ENCODE measurements at regions of chr4 and their contacts with region 1.

Region 1: DNA sequence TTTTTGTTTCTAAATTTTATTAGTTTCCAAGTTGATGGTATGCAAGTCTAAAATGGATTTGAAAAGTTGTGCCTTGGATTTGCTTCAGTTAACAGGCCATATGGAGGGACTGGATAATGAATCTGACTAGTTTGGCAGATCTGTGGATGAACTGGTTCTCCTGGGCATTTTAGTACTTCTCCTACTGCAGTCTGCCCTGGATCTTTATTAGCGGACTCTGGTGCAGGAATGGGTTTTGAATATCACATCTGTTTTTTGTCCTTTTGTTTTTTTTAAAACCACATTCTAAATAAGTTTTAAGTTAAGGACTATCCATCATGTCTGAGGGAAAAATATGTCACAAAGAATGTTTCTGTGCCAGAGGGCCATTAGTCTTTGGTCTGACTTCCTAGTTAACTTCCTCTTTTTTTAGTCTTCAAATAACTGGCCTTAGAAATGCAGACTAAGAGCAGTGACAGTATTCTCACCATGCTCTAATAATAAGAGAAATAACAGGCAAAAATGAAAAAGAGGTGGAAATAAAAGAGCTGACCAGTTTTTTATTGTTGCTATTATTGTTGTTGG is 13.9 kb upstream of the DCK start:
- DNase-seq: no peak
- ATAC-seq: peak; percentile 34
- H3K4me3 Mint-ChIP-seq: no peak overlapping the region
- H3K27ac Mint-ChIP-seq: peak overlapping the region; percentile 59
- H3K4me1 Mint-ChIP-seq: peaks cover 17% of the 10 kb centered on the region
- H3K27me3 Mint-ChIP-seq: no peaks in the 10 kb centered on the region
- CTCF ChIP-seq: no peak

Region 2: GRCh38 chr4:71026086-71026485 is 46.6 kb after region 1 on chr4:
- CTCF ChIA-PET with region 1: no interaction called
- POLR2A ChIA-PET with region 1: no interaction called
- intact Hi-C with region 1: loop called (anchors 5 kb)
- DNase-seq: no peak
- ATAC-seq: no peak
- H3K4me3 Mint-ChIP-seq: no peak overlapping the region
- H3K27ac Mint-ChIP-seq: peak overlapping the region; percentile 21
- H3K4me1 Mint-ChIP-seq: peaks cover 3% of the 10 kb centered on the region
- H3K27me3 Mint-ChIP-seq: no peaks in the 10 kb centered on the region
- CTCF ChIP-seq: no peak

Region 3: DNA sequence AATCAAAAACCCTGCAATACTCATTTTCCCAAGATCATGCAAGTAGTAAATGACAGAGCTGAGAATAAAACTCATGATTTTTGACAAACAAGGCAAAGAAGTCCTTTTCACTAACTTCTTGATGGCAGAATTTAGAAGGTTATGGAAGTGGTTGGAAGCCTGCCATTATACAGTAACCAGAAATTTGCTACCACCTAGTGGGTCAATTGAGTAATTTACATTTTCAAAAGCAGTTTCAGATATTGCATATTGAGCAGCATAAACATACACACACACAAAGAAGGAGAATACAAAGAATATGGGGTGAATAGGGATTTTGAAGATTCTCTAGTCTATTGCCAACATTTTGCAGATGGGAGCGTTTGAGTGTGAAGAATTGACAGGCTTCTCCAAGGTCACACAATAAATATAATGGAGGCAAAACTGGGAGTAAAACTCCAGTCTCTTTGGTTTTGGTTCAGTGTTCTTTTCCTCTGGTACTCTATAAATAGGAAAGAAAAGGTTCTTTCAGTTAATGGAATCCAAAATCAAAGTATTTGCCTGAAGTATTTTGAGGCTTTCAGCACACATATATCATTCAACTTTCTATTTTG is 734.2 kb after region 1 on chr4:
- CTCF ChIA-PET with region 1: no interaction called
- POLR2A ChIA-PET with region 1: no interaction called
- intact Hi-C with region 1: loop called (anchors 5 kb)
- DNase-seq: no peak
- ATAC-seq: no peak
- H3K4me3 Mint-ChIP-seq: no peak overlapping the region
- H3K27ac Mint-ChIP-seq: no peak overlapping the region
- H3K4me1 Mint-ChIP-seq: no peaks in the 10 kb centered on the region
- H3K27me3 Mint-ChIP-seq: no peaks in the 10 kb centered on the region
- CTCF ChIP-seq: no peak

Region 4: DNA sequence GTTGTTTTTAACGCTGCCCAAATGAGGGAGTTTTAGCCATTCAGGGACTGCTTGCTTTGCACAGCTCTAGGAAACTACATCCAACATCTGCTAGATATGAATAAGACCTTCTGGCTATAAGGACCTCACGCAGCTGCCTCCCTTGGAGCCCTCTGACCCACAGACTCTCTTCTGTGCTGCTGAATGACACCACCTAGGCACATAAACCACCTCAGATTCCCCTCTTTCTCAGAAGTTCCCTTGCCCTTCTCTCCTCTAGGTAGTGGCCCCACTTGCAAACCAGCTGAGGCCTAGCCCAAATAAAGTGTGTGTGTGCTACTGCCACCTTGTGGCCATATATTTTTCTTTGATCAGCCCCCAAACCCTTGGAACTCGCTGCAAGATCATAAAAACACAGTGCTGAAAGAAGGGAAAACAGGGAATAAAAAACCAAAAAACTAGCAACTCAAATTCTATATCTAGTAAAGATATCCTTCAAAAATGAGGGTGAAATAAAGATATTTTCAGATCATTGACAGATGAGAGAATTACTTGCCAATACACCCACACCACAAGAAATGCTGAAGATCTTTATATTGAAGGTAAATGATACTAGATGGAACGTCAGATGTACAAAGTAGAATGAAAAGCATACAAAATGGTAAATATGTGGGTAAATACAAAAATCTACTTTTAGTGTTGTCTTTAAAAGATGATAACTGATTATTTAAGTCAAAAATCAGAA is 1323.6 kb after region 1 on chr4:
- CTCF ChIA-PET with region 1: no interaction called
- POLR2A ChIA-PET with region 1: no interaction called
- intact Hi-C with region 1: loop called (anchors 10 kb)
- DNase-seq: peak; percentile 15
- ATAC-seq: peak; percentile 50
- H3K4me3 Mint-ChIP-seq: no peak overlapping the region
- H3K27ac Mint-ChIP-seq: no peak overlapping the region
- H3K4me1 Mint-ChIP-seq: no peaks in the 10 kb centered on the region
- H3K27me3 Mint-ChIP-seq: no peaks in the 10 kb centered on the region
- CTCF ChIP-seq: no peak

Region 5: DNA sequence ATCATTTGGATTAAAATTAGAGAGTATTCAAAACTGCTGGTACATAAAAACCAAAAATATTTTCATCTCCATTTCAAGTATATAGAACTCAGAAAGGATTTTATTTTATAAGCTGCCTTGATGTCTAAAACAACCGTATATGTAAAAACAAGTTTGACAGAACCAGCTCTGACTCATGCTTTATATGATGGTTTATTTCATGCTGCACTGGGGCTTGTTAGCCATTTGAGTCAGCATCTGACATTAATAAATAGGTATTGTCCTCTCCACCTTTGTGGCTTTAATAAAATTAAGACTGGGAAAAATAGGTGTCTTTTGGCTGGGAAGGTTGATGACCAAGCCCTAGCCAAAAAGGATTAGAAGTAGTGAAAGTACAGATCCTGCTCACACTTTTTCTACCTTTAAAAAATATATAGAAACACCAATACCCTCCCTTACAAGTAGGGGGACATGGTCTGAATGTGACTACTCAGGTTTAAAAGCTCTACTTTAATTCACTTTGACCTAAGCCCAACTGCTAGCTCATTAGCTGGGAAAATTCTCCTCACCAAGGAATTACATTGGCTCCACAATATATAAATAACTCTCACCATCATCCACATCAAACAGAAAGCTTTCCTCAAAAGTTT is 1361.4 kb after region 1 on chr4:
- CTCF ChIA-PET with region 1: no interaction called
- POLR2A ChIA-PET with region 1: no interaction called
- intact Hi-C with region 1: no loop called
- DNase-seq: no peak
- ATAC-seq: no peak
- H3K4me3 Mint-ChIP-seq: no peak overlapping the region
- H3K27ac Mint-ChIP-seq: no peak overlapping the region
- H3K4me1 Mint-ChIP-seq: no peaks in the 10 kb centered on the region
- H3K27me3 Mint-ChIP-seq: peaks cover 2% of the 10 kb centered on the region
- CTCF ChIP-seq: no peak

Measured in activated B cell treated with CpG ODN at 0.5 μM for 24 hours (primary cell).